ENCODE measurements at regions of chr2 and their contacts with region 1.

Region 1: DNA sequence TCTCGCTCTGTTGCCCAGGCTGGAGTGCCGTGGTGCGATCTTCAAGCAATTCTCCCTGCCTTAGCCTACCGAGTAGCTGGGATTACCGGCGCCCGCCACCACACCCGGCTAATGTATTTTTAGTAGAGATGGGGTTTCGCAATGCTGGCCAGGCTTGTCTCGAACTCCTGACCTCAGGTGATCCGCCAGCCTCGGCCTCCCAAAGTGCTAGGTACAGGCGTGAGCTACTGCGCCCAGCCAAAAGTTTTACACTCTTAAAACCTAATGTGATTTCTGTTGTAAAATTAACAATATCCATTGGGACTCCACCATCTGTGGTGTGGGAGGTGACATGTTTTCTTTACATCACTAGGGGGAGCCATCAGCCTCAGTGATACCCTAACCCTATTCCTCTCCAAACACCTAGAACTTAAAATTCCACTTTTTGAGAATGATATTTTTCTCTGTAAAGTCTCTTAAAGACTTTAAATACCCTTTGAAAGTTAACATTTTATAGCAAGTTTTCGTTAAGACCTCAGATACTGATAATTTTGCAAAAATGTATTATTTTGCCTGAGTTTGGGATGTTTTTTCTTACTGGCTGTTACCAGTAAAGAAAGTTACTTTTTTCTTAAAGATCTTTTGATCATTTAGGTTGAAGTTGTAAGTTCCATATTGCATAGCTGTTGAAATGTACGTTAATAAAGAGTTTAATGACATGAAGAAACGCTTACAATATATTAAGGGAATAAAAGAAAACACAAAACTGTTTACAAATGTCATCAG is 11.6 kb upstream of the EIF2AK2 start:
- DNase-seq: peak in 1 of 2 experiments; percentile 64
- H3K4me3 ChIP-seq: no peak overlapping the region
- H3K27ac ChIP-seq: no peak overlapping the region
- H3K4me1 ChIP-seq: no peaks in the 10 kb centered on the region
- H3K27me3 ChIP-seq: no peaks in the 10 kb centered on the region
- CTCF ChIP-seq: peak in 2 of 3 experiments; percentile 49 to 78; a peak in 2 of 4 replicates
- EP300 ChIP-seq: no peak
- POLR2A ChIP-seq: no peak
- RAD21 ChIP-seq: peak; percentile 82 to 83

Region 2: DNA sequence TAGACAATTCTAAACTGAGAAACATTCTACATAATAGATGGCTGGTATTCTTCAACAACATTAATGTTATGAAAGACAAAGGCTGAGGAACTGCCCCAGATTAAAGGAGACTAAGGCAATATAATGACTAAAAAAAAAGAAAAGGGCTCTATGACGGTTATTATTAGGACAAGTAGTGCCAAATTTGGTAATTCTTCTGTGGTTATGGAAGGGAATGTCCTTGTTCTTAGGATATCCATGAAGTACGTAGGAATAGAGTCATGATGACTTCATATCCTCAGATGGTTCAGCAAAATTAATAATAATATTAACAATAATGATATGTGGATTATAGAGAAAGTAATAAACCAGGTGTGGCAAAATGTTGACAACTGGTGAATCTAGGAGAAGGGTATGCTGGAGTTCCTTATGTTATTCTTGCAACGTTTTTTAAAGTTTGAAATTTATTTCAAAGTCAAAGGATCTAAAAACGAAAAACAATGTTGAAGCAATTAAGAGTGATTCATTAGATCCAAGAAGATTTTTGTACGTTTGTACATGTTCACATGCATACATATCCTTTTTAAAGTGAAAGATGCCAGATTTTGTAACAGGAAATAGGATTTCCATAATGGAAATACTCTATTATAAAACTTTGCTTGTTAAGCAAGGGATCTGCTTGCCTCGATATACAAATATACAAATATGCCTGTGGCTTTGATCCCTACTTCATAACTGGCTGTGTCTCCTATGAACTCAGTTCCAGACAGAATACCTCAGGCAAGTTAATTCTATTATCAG is 174.4 kb before region 1 on chr2:
- CTCF ChIA-PET with region 1: no interaction called
- POLR2A ChIA-PET with region 1: no interaction called
- DNase-seq: no peak
- H3K4me3 ChIP-seq: no peak overlapping the region
- H3K27ac ChIP-seq: no peak overlapping the region
- H3K4me1 ChIP-seq: no peaks in the 10 kb centered on the region
- H3K27me3 ChIP-seq: no peaks in the 10 kb centered on the region
- CTCF ChIP-seq: no peak
- EP300 ChIP-seq: no peak
- POLR2A ChIP-seq: no peak
- RAD21 ChIP-seq: no peak

Region 3: DNA sequence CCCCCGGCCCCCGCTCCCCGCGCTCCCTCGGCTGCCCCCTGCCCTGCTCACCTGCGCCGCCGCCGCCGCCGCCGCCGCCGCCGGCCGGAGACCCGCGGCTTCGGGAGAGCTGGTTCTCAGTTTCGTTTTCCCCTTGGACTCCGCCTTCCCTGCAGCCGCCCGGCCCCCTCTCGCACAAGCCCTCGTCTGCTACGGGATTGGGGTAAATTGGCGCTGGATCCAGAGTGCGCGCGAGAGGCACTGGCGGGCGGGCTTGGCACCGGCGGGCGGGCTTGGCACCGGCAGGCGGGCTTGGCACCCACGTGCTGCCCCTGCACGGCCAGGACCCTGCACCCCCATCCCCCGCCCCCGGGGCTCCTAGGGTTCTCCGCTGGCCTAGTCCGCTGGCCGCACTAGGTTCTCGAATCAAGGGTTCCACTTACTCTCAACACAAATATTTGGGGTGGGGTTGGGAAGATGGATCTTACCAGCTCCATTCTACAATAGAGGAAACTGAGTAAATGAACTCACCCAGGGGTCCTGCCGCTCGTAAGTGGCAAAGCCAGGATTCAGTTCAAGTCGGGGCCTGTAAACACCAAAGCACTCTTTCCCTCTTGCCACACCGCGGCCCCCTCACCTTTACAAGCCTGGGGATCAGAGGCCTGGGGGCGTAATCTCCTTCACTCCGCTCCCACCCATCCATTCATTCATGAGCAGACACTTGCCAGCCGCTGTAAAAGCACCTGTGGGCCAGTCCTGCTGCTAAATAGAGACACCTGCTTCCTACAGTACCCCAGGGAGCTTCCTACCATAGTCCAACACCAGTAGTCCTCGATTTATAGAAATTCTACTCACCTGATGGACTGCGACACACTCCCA is 11.3 kb before region 1 on chr2 and contains the start of gene EIF2AK2:
- CTCF ChIA-PET with region 1: interaction called, 16 read pairs
- POLR2A ChIA-PET with region 1: interaction called, 4 read pairs
- DNase-seq: peak in 1 of 2 experiments; percentile 86
- H3K4me3 ChIP-seq: peak within 1 kb of the TSS; percentile 61 to 87 (median 70)
- H3K27ac ChIP-seq: no peak within 1 kb of the TSS
- H3K4me1 ChIP-seq: peaks cover 0 to 11% (median 8%) of the 10 kb centered on the region in 4 experiments; a peak in 6 of 7 replicates
- H3K27me3 ChIP-seq: no peaks in the 10 kb centered on the region
- CTCF ChIP-seq: no peak
- EP300 ChIP-seq: 0 out of 3 replicates have a peak, but pooled peaks of 1 of the 2 experiments have one; percentile 41
- POLR2A ChIP-seq: peak; percentile 11 to 54; a peak in 2 of 3 replicates
- RAD21 ChIP-seq: no peak
- total RNA-seq, gene EIF2AK2: 46.3 and 46.9 TPM in 2 replicates

Region 4: DNA sequence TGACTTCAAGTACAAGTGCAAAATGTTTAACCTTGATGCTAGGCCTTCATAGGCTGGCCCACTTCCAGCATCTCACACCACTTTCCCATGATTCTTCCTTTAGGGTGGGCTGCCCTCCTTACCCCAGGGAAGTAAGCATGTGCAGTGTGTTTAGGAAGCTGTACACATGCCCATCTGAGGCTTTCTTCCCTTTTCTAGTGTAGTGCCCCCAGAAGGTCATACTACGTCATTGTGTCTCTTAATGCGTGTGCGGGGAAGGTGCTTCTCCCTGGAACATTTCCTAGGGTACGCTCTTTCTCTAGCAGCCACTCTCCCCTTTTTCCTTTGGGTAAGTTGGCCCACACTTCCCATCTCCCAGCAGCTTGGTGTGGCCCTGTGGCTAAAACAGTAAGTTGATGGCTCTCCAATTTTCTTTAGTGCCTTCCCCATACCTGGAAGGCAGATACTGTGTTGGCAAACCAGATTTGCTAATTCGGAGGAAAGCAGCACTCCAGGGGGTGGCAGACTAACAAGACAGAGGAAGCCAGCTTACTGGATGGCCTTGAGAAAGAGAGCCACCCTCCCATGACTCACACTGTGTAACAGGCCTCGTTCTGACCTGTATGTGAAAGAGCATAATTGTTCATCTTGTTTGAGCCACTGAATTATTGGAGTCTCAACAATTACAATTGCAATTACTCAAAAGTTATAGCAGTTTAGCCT is 21.2 kb after region 1 on chr2:
- CTCF ChIA-PET with region 1: interaction called, 48 read pairs
- POLR2A ChIA-PET with region 1: interaction called, 6 read pairs
- DNase-seq: peak in 1 of 2 experiments; percentile 69
- H3K4me3 ChIP-seq: no peak overlapping the region
- H3K27ac ChIP-seq: no peak overlapping the region
- H3K4me1 ChIP-seq: peaks cover 14 to 25% (median 16%) of the 10 kb centered on the region in 4 experiments
- H3K27me3 ChIP-seq: no peaks in the 10 kb centered on the region
- CTCF ChIP-seq: peak in 1 of 3 experiments; percentile 13; a peak in 1 of 4 replicates
- EP300 ChIP-seq: no peak
- POLR2A ChIP-seq: no peak
- RAD21 ChIP-seq: no peak

Region 5: GRCh38 chr2:37215250-37215649 is 46.9 kb after region 1 on chr2:
- CTCF ChIA-PET with region 1: interaction called, 13 read pairs
- POLR2A ChIA-PET with region 1: no interaction called
- DNase-seq: no peak
- H3K4me3 ChIP-seq: no peak overlapping the region
- H3K27ac ChIP-seq: no peak overlapping the region
- H3K4me1 ChIP-seq: no peaks in the 10 kb centered on the region
- H3K27me3 ChIP-seq: no peaks in the 10 kb centered on the region
- CTCF ChIP-seq: no peak
- EP300 ChIP-seq: no peak
- POLR2A ChIP-seq: no peak
- RAD21 ChIP-seq: no peak

Region 6: GRCh38 chr2:37231241-37232130 is 63.1 kb after region 1 on chr2 and contains the starts of genes CEBPZ and NDUFAF7:
- CTCF ChIA-PET with region 1: interaction called, 11 read pairs
- POLR2A ChIA-PET with region 1: interaction called, 4 read pairs
- DNase-seq: peak; percentile 31 to 83
- H3K4me3 ChIP-seq: peak within 1 kb of the TSS; percentile 95 to 98 (median 96)
- H3K27ac ChIP-seq: peak within 1 kb of the TSS; percentile 76
- H3K4me1 ChIP-seq: peaks cover 7 to 19% (median 11%) of the 10 kb centered on the region in 4 experiments
- H3K27me3 ChIP-seq: no peaks in the 10 kb centered on the region
- CTCF ChIP-seq: peak in 1 of 3 experiments; percentile 0; a peak in 1 of 4 replicates
- EP300 ChIP-seq: no peak
- POLR2A ChIP-seq: peak in 1 of 2 experiments; percentile 75; a peak in 1 of 3 replicates
- RAD21 ChIP-seq: no peak
- total RNA-seq, gene CEBPZ: 186 and 201 TPM in 2 replicates
- total RNA-seq, gene NDUFAF7: 46.8 and 56.0 TPM in 2 replicates

Region 7: GRCh38 chr2:37250869-37251740 is 82.7 kb after region 1 on chr2:
- CTCF ChIA-PET with region 1: interaction called, 23 read pairs
- POLR2A ChIA-PET with region 1: no interaction called
- DNase-seq: no peak
- H3K4me3 ChIP-seq: no peak overlapping the region
- H3K27ac ChIP-seq: no peak overlapping the region
- H3K4me1 ChIP-seq: no peaks in the 10 kb centered on the region
- H3K27me3 ChIP-seq: no peaks in the 10 kb centered on the region
- CTCF ChIP-seq: no peak
- EP300 ChIP-seq: no peak
- POLR2A ChIP-seq: no peak
- RAD21 ChIP-seq: no peak